Right cardiac atrium (tissue), 5 donors: ENCODE measurements at regions of chr9 and their contacts with region 1.

Region 1: DNA sequence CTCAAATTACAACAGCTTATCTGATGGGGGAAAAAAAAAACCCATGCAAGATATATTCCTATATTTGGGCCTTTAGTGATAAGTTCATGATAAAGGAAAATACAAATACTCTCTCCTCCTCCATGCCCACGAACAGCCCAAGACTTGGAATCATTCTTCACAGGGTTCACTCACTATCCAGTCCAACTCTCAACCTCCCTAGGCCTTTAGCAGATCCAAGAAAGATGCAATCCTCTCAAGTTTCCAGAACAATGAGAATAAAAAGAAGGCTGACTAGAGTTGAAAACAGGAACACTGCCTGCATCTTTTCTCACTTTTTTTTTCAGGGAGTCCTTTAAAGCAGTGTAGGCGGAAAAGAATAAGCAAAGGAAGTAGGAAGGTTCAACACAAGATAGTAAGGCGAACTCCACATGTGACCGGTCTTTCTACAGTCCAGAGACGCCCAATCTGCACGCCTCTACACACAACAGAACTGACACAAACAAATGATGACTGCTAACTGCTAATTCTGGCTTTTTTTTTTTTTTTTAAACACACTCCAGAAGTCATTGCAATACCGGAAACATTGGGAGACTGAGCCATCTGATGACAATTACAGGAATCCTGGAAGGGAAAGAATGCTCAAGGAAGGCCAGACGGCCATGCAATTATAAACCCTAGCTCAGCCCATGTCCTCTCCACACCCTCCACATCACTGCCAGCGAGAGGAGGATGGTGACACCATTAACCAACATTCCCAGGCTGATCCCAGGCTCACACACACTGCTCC is 75.4 kb downstream of the BNC2 start:
- DNase-seq: peak in 2 of 3 donors; percentile 59 to 74
- ATAC-seq: peak; percentile 87 to 95
- H3K4me3 ChIP-seq: no peak overlapping the region
- H3K27ac ChIP-seq: no peak overlapping the region
- H3K4me1 ChIP-seq: no peaks in the 10 kb centered on the region
- H3K27me3 ChIP-seq: no peaks in the 10 kb centered on the region

Region 2: GRCh38 chr9:16352791-16353411 is 442.2 kb before region 1 on chr9:
- intact Hi-C with region 1: no loop called
- DNase-seq: peak in 1 of 3 donors; percentile 59
- ATAC-seq: peak; percentile 72 to 75
- H3K4me3 ChIP-seq: no peak overlapping the region
- H3K27ac ChIP-seq: no peak overlapping the region
- H3K4me1 ChIP-seq: no peaks in the 10 kb centered on the region
- H3K27me3 ChIP-seq: no peaks in the 10 kb centered on the region

Region 3: GRCh38 chr9:16729651-16730050 is 65.4 kb before region 1 on chr9:
- intact Hi-C with region 1: loop called in 1 of 4 experiments (anchors 10 kb)
- DNase-seq: no peak
- ATAC-seq: no peak
- H3K4me3 ChIP-seq: no peak overlapping the region
- H3K27ac ChIP-seq: no peak overlapping the region
- H3K4me1 ChIP-seq: no peaks in the 10 kb centered on the region
- H3K27me3 ChIP-seq: no peaks in the 10 kb centered on the region